Activated naive CD4-positive, alpha-beta T cell treated with anti-CD3 and anti-CD28 coated beads for 36 hours (primary cell): ENCODE measurements at regions of chr15 and their contacts with region 1.

Region 1: GRCh38 chr15:58987489-58988005 is at the start of gene RNF111:
- DNase-seq: peak; percentile 95
- H3K4me3 Mint-ChIP-seq: peak within 1 kb of the TSS; percentile 93
- H3K27ac Mint-ChIP-seq: peak within 1 kb of the TSS; percentile 88
- H3K4me1 Mint-ChIP-seq: peaks cover 31% of the 10 kb centered on the region
- H3K27me3 Mint-ChIP-seq: no peaks in the 10 kb centered on the region
- total RNA-seq, gene RNF111: 17.8 to 19.8 TPM

Region 2: GRCh38 chr15:58924327-58924726 is 63.2 kb before region 1 on chr15:
- CTCF ChIA-PET with region 1: no interaction called
- intact Hi-C with region 1: no loop called
- DNase-seq: no peak
- H3K4me3 Mint-ChIP-seq: no peak overlapping the region
- H3K27ac Mint-ChIP-seq: no peak overlapping the region
- H3K4me1 Mint-ChIP-seq: peaks cover 24% of the 10 kb centered on the region
- H3K27me3 Mint-ChIP-seq: no peaks in the 10 kb centered on the region

Region 3: GRCh38 chr15:58947179-58947578 is 40.4 kb before region 1 on chr15:
- CTCF ChIA-PET with region 1: no interaction called
- intact Hi-C with region 1: no loop called
- DNase-seq: no peak
- H3K4me3 Mint-ChIP-seq: no peak overlapping the region
- H3K27ac Mint-ChIP-seq: no peak overlapping the region
- H3K4me1 Mint-ChIP-seq: peaks cover 1% of the 10 kb centered on the region
- H3K27me3 Mint-ChIP-seq: no peaks in the 10 kb centered on the region

Region 4: DNA sequence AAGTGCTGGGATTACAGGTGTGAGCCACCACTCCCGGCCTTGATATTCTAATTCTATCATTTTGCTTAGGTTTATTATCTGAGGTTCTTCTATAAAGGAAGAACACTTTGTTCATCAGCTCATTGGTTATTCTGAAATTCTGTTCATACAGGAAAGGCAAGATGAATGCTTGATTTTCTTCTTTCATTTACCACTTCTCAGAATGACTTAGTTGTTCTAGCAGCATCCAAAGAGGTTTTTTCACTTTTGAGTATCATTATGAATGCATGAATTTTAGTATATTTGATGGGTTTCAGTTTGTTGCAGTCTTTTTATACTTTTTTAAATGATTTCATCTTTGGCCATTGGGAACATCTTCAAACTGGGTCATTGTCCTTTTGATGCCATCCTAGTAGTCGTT is 51.7 kb after region 1 on chr15:
- CTCF ChIA-PET with region 1: no interaction called
- intact Hi-C with region 1: loop called (anchors 5 kb)
- DNase-seq: no peak
- H3K4me3 Mint-ChIP-seq: no peak overlapping the region
- H3K27ac Mint-ChIP-seq: peak overlapping the region; percentile 66
- H3K4me1 Mint-ChIP-seq: peaks cover 54% of the 10 kb centered on the region
- H3K27me3 Mint-ChIP-seq: no peaks in the 10 kb centered on the region

Region 5: GRCh38 chr15:59104912-59105732 is 117.6 kb after region 1 on chr15 and contains the start of gene CCNB2:
- CTCF ChIA-PET with region 1: interaction called, 4 read pairs
- intact Hi-C with region 1: loop called (anchors 1 kb)
- DNase-seq: peak; percentile 91
- H3K4me3 Mint-ChIP-seq: peak within 1 kb of the TSS; percentile 93
- H3K27ac Mint-ChIP-seq: peak within 1 kb of the TSS; percentile 91
- H3K4me1 Mint-ChIP-seq: peaks cover 11% of the 10 kb centered on the region
- H3K27me3 Mint-ChIP-seq: no peaks in the 10 kb centered on the region
- total RNA-seq, gene CCNB2: 93.1 to 98.2 TPM

Region 6: DNA sequence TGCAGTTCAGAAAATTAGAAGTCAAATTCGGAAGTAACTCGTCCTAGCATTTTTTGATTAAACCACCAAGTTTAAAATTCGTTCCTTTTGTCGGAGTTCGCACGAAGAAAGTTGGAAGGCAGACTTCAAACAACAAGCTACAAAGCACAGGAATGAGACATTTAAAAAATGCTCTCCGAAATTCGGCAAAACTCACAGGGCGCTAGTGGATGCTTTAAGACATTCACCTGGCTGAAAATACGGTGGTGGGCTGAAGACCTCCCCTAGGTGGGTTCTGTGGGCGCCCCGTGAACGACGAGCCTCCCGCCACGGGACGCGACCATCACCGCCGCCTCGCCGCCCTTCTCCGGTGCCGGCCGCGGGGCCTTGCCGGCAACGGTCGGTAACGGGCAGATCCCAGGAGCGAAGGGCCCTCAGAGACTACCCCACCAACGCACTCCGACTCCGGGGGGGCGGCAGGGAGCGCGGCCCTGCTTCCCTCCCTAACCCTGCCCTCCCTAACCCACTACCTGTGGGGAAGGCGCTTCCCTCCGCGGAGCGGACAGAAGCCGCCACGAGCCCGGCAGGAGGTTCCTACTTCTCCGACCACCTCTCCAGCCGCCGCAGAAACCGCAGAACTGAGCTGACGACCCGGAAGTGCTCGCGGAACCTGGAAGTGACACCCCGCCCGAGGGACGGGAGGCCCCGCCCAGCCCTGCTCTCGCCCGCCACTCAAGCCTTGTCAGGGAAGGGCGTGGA is 669.5 kb after region 1 on chr15 and contains the start of gene GTF2A2:
- CTCF ChIA-PET with region 1: no interaction called
- intact Hi-C with region 1: loop called (anchors 2 kb)
- DNase-seq: peak; percentile 96
- H3K4me3 Mint-ChIP-seq: peak within 1 kb of the TSS; percentile 28
- H3K27ac Mint-ChIP-seq: peak within 1 kb of the TSS; percentile 61
- H3K4me1 Mint-ChIP-seq: peaks cover 10% of the 10 kb centered on the region
- H3K27me3 Mint-ChIP-seq: no peaks in the 10 kb centered on the region
- total RNA-seq, gene GTF2A2: 146 to 155 TPM